CD4-positive, alpha-beta T cell (primary cell): ENCODE measurements at regions of chr5 and their contacts with region 1.

Region 1: DNA sequence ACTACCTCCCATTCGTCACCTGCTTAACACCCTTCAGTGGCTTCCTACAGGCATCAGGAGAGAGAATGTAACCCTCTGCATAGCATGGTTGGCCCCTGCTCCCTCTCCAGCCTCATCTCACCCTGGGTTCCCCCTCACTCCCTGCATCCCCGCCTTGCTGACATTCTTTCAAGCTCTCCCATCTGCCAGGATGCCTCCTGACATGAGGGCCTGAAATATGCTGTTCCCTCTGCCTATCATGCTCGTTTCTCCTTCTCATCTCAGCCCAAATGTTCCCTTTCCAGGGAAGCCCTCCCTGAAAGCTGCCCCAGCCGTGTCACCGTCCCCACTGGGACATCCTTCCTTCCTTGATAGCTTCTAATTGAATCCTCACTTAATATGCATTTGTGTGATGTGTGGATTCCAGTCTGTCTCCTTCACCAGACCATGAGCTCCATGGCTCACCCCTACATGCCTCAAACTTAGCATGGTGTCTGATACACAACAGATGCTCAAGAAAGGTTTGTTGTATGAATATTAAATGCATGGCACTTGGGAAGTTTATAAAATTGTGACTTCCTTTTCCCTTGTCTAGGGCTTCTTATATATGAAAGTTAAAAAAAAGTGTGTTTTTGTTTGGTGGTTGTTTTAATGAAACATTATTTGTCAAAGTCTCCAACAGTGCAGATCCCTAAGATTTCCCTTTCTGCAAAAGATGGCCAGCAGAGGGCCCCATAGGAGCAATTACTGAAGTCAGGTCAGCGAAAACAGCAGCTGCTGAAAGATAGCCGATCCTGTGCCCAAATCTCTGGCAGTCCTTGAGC is 7.3 kb upstream of the C5orf58 start:
- DNase-seq: peak; percentile 63 to 88 (median 75)
- ATAC-seq: peak; percentile 66
- H3K4me3 ChIP-seq: no peak overlapping the region
- H3K4me3 Mint-ChIP-seq: no peak overlapping the region
- H3K27ac ChIP-seq: no peak overlapping the region
- H3K27ac Mint-ChIP-seq: no peak overlapping the region
- H3K4me1 ChIP-seq: peaks cover 4% of the 10 kb centered on the region
- H3K4me1 Mint-ChIP-seq: peaks cover 4% of the 10 kb centered on the region
- H3K27me3 ChIP-seq: no peaks in the 10 kb centered on the region
- H3K27me3 Mint-ChIP-seq: no peaks in the 10 kb centered on the region
- CTCF ChIP-seq: peak; percentile 93

Region 2: DNA sequence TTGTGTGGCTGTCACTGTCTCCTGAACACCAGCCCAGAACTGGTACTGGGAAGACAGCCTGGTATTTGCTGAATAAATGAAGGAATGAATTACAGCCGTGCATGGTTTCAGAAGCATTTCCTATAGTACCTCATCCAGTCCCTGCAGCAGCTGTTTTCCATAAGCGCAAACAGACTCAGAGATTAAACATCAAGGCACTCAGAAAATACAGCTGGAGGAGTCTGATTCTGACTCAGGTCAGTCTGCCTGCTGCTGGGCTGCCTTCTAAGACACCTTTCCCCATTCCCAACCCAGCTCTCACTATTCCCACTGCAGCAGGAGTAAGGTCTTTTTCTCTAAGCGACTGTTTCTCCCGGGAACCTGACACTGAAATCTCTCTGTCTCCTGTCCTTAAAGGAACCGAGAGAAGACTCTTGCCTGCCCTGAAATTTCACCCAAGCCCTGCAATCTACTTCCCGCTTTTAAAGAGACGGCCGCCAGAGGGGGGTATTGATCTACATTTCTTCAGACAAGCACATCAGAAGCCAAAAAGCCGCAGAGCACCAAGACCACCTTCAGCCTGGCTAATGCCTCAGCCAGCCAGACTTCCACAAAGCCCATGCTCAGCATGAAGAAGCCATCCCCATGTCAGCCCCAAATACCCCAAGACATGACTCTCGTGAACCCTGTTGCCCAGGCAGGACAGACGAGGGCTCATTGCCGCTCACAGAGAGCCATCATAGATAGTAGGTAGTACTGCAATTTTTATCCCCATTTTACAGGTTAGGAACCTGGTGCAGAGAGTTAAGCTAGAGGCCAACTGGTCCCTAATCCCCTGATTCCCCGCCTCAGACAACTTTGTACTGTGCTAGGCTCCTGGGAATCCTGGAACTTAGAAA is 125.2 kb before region 1 on chr5:
- CTCF ChIA-PET with region 1: no interaction called
- POLR2A ChIA-PET with region 1: no interaction called
- intact Hi-C with region 1: loop called in 1 of 2 experiments (anchors 5 kb)
- DNase-seq: peak; percentile 48 to 79 (median 60)
- ATAC-seq: peak; percentile 56
- H3K4me3 ChIP-seq: no peak overlapping the region
- H3K4me3 Mint-ChIP-seq: no peak overlapping the region
- H3K27ac ChIP-seq: no peak overlapping the region
- H3K27ac Mint-ChIP-seq: no peak overlapping the region
- H3K4me1 ChIP-seq: peaks cover 2% of the 10 kb centered on the region
- H3K4me1 Mint-ChIP-seq: no peaks in the 10 kb centered on the region
- H3K27me3 ChIP-seq: no peaks in the 10 kb centered on the region
- H3K27me3 Mint-ChIP-seq: peaks cover 20% of the 10 kb centered on the region
- CTCF ChIP-seq: peak; percentile 67

Region 3: DNA sequence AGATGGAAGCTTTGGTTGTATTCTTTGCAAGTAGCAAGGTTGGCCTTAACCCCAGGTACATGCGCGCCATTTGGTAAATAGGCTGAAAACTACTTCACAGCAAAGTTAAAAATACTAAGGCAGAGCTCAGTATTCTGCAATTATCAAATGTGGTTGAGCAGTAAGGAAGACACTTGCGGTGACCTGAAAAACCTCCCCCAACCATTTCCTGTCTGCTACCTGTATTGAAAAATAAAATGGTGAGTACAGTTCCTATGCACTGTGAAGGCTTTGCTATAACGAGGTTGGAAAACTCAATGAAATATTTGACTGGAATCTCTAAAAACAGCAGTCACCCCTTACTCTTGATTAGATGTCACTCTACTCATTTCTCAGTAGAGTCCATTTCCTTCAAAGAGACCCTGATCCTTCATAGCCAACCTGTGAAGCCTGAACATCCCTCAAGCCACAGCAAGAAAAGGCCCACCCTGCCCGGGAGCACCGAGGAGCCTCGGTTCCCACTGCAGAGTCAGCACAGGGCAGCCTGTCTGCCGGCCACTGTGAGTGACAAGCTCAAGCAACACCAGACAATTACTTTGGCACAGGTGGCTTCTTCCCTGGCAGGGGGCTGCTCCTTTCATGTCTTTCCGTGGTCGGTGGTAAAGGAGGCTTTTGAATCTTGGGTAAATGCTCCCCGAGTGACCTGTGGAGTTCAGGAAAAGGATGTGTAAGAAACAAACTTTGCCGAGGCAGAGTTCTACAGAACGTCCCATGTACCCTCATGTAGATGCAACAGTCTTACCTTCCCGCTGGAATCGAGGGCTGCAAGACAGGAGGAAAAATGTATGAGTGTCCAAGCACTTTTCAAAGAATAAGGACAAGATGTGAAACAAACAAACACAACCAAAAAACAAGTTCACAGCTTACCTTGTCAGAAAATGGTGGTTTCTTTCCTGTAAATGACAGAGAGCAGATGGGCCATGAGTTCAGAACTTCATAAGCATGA is 36.8 kb after region 1 on chr5:
- CTCF ChIA-PET with region 1: interaction called, 23 read pairs
- POLR2A ChIA-PET with region 1: interaction called, 9 read pairs
- intact Hi-C with region 1: loop called (anchors 1 to 2 kb)
- DNase-seq: peak in 9 of 14 experiments; percentile 40 to 88 (median 61)
- ATAC-seq: peak; percentile 88
- H3K4me3 ChIP-seq: peak overlapping the region; percentile 11
- H3K4me3 Mint-ChIP-seq: peak overlapping the region; percentile 52
- H3K27ac ChIP-seq: peak overlapping the region; percentile 62 to 88
- H3K27ac Mint-ChIP-seq: peak overlapping the region; percentile 96
- H3K4me1 ChIP-seq: peaks cover 63% of the 10 kb centered on the region
- H3K4me1 Mint-ChIP-seq: peaks cover 91% of the 10 kb centered on the region
- H3K27me3 ChIP-seq: no peaks in the 10 kb centered on the region
- H3K27me3 Mint-ChIP-seq: no peaks in the 10 kb centered on the region
- CTCF ChIP-seq: no peak

Region 4: GRCh38 chr5:170278611-170279452 is 53.3 kb after region 1 on chr5:
- CTCF ChIA-PET with region 1: interaction called, 30 read pairs
- POLR2A ChIA-PET with region 1: interaction called, 3 read pairs
- intact Hi-C with region 1: no loop called
- DNase-seq: peak; percentile 76 to 95 (median 84)
- ATAC-seq: peak; percentile 67
- H3K4me3 ChIP-seq: peak overlapping the region; percentile 28
- H3K4me3 Mint-ChIP-seq: peak overlapping the region; percentile 85
- H3K27ac ChIP-seq: peak overlapping the region; percentile 63 to 92
- H3K27ac Mint-ChIP-seq: peak overlapping the region; percentile 96
- H3K4me1 ChIP-seq: peaks cover 98% of the 10 kb centered on the region
- H3K4me1 Mint-ChIP-seq: peaks cover 92% of the 10 kb centered on the region
- H3K27me3 ChIP-seq: no peaks in the 10 kb centered on the region
- H3K27me3 Mint-ChIP-seq: no peaks in the 10 kb centered on the region
- CTCF ChIP-seq: no peak

Region 5: DNA sequence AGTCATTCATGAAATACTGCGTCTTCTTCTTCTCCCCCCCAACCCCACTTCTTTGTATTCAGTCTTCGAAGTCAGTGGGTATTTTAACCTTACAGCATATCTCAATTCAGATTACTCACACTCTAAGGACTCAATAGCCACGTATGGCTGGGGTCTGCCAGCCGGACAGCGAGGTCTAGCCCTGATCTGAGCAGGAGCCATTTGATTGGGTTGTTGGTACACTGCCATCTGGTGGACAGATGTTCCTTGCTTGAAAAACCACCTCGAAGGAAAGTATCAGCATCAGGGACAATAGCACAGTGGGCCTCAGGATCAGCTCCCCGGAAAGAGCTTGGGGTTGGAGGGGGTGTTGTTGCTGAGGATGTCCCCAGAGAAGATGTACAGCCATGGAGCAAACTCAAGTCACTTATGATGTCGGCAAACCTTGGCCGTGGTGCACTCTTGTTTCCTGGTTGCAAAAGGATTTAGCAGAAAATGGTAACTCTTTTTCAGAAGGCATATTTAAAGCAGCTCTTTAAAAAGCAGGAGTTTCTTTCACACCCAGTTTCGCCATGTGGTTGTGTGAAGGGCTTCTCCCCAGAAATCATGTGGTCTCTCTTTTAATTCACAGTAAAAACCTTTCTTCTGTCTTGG is 195.4 kb after region 1 on chr5:
- CTCF ChIA-PET with region 1: interaction called, 10 read pairs
- POLR2A ChIA-PET with region 1: interaction called, 4 read pairs
- intact Hi-C with region 1: loop called (anchors 1 kb)
- DNase-seq: peak in 13 of 14 experiments; percentile 11 to 81 (median 39)
- ATAC-seq: peak; percentile 55
- H3K4me3 ChIP-seq: no peak overlapping the region
- H3K4me3 Mint-ChIP-seq: no peak overlapping the region
- H3K27ac ChIP-seq: no peak overlapping the region
- H3K27ac Mint-ChIP-seq: no peak overlapping the region
- H3K4me1 ChIP-seq: peaks cover 18% of the 10 kb centered on the region
- H3K4me1 Mint-ChIP-seq: peaks cover 21% of the 10 kb centered on the region
- H3K27me3 ChIP-seq: no peaks in the 10 kb centered on the region
- H3K27me3 Mint-ChIP-seq: no peaks in the 10 kb centered on the region
- CTCF ChIP-seq: peak; percentile 81

Region 6: DNA sequence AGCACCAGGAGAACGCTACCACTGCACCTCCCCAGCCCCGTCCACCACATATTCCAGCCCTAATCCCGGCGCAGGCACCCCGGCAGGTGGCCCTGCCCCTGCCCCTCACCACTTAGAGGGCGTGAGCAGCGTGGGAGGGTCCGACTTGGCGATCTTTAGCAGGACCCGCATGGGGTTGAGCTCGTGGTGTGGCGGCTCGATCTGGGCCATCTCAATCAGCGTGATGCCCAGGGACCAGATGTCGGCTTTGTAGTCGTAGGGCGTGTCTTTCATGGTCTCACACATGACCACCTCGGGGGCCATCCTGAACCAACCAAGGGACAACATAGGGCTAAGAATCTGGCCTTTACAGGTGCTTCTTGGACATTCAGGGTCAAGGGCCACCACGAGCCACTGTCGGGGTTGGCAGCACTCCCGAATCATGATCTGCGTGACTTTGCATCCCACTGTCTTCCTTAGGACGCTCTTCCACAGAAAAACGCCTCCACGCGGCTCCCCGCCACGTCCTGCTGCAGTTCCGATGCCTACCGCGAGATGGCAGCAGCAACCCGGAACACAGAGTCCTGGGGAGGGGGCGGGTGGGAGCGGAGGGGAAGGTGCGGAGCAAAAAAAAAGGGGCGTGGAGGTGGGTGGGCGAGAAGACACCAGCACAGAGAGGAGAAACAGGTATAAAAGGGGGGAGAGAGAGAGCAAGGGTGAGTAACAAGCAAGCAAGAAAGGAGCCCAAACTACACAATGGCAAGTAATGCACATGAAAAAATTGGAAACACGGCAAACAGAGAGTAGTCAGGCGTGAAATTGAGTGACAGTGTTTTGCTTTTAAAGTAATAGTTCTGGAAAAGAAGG is 1881.2 kb after region 1 on chr5:
- CTCF ChIA-PET with region 1: no interaction called
- POLR2A ChIA-PET with region 1: no interaction called
- intact Hi-C with region 1: no loop called
- DNase-seq: peak; percentile 52 to 82 (median 66)
- ATAC-seq: peak; percentile 22
- H3K4me3 ChIP-seq: no peak overlapping the region
- H3K4me3 Mint-ChIP-seq: peak overlapping the region; percentile 42
- H3K27ac ChIP-seq: peak overlapping the region in 1 of 2 donors; percentile 5
- H3K27ac Mint-ChIP-seq: peak overlapping the region; percentile 81
- H3K4me1 ChIP-seq: peaks cover 49% of the 10 kb centered on the region
- H3K4me1 Mint-ChIP-seq: peaks cover 46% of the 10 kb centered on the region
- H3K27me3 ChIP-seq: no peaks in the 10 kb centered on the region
- H3K27me3 Mint-ChIP-seq: no peaks in the 10 kb centered on the region
- CTCF ChIP-seq: peak; percentile 98